Esophagus muscularis mucosa (tissue), 4 donors: ENCODE measurements at regions of chr4 and their contacts with region 1.

Region 1: DNA sequence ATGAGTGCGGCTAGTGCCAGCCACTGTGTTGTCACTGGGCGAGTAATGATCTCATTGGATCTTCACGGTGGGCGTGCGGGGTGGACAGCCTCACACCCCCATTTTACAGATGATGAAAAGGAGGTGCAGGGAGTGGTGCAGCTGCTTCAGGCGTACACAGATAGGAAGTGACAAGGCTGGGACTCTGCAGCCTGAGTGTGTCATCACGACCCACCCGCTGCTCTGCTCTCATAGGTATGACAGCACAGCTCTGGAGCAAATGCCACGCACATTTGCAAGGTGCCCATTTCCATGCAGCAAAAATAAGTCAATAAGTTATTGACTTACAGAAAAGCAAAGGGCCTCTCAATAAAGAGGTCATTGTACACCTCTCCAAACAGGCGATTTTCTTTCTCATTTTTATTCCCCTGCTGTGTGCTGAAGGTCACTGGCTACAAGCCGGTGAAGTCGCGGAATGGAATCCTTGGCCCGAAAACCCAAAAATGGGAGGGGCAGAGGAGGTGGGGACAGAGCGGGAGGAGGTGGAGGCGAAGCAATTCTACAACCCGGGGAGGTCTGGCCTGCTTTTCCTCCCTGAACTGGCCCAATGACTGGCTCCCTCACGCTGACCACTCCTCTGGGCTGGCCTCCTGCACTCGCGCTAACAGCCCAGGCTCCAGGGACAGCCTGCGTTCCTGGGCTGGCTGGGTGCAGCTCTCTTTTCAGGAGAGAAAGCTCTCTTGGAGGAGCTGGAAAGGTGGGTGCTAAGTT is at the start of gene SOD3:
- DNase-seq: peak; percentile 97
- H3K4me3 ChIP-seq: peak within 1 kb of the TSS; percentile 55 to 73 (median 58)
- H3K27ac ChIP-seq: peak within 1 kb of the TSS; percentile 90 to 96 (median 92)
- H3K4me1 ChIP-seq: peaks cover 30 to 73% (median 66%) of the 10 kb centered on the region in 4 donors
- H3K27me3 ChIP-seq: peaks cover 0 to 5% (median 0%) of the 10 kb centered on the region in 4 donors
- CTCF ChIP-seq: no peak
- EP300 ChIP-seq: peak; percentile 23
- POLR2A ChIP-seq: peak; percentile 84
- total RNA-seq, gene SOD3: 404 to 1,012 (median 570) TPM

Region 2: GRCh38 chr4:24472514-24473308 is 322.4 kb before region 1 on chr4:
- intact Hi-C with region 1: loop called (anchors 10 kb)
- DNase-seq: peak; percentile 97
- H3K4me3 ChIP-seq: peak overlapping the region; percentile 68 to 81 (median 72)
- H3K27ac ChIP-seq: peak overlapping the region; percentile 81 to 94 (median 88)
- H3K4me1 ChIP-seq: peaks cover 16 to 60% (median 51%) of the 10 kb centered on the region in 4 donors
- H3K27me3 ChIP-seq: peaks cover 0 to 16% (median 0%) of the 10 kb centered on the region in 4 donors
- CTCF ChIP-seq: peak; percentile 58 to 81 (median 62)
- EP300 ChIP-seq: no peak
- POLR2A ChIP-seq: peak; percentile 9

Region 3: GRCh38 chr4:24584175-24584850 is 210.8 kb before region 1 on chr4 and contains the start of gene DHX15:
- intact Hi-C with region 1: loop called (anchors 10 kb)
- DNase-seq: peak; percentile 99
- H3K4me3 ChIP-seq: peak within 1 kb of the TSS; percentile 78 to 99 (median 97)
- H3K27ac ChIP-seq: peak within 1 kb of the TSS; percentile 96 to 100 (median 98)
- H3K4me1 ChIP-seq: peaks cover 25 to 43% (median 41%) of the 10 kb centered on the region in 4 donors
- H3K27me3 ChIP-seq: no peaks in the 10 kb centered on the region
- CTCF ChIP-seq: no peak
- EP300 ChIP-seq: no peak
- POLR2A ChIP-seq: peak; percentile 61
- total RNA-seq, gene DHX15: 86.8 to 113 (median 94.4) TPM

Region 4: DNA sequence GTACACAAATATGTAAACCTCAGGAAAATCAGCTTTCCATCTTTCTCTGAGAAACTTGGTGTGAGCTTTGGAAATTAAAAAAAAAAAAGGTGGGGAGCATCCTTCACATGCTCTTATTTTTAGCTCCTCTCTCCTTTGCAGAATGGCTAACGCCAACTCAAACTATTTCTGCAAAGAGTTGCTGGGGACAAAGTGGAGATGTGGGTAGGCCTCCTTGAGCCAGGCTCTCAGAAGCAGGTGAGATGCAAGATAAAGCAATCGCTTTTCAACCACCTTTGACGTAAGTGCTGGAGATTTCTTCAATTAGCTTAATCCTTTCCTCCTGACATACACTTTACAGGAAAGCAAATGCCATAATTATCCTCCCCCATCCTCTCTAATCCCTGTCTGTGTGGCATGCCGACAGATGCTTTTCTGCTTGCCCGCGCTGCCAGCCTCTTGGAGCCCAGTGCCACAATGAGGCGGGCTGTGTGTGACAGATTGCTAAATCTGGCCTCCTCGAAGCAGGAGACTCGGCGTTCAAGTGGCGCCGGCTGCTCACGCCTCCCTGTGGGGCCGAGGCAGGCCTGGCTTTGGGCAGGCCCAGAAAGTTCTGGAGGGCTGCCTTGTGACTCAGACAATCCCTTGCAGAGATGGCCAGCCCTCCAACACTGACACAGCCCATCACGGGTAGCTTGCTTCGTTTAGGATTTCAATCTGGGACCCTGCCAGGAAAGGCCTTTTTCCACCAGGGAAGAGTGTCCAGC is 64.7 kb before region 1 on chr4:
- intact Hi-C with region 1: no loop called
- DNase-seq: no peak
- H3K4me3 ChIP-seq: no peak overlapping the region
- H3K27ac ChIP-seq: peak overlapping the region; percentile 46 to 76 (median 67)
- H3K4me1 ChIP-seq: peaks cover 8 to 44% (median 43%) of the 10 kb centered on the region in 4 donors
- H3K27me3 ChIP-seq: no peaks in the 10 kb centered on the region
- CTCF ChIP-seq: no peak
- EP300 ChIP-seq: peak; percentile 1
- POLR2A ChIP-seq: no peak

Region 5: DNA sequence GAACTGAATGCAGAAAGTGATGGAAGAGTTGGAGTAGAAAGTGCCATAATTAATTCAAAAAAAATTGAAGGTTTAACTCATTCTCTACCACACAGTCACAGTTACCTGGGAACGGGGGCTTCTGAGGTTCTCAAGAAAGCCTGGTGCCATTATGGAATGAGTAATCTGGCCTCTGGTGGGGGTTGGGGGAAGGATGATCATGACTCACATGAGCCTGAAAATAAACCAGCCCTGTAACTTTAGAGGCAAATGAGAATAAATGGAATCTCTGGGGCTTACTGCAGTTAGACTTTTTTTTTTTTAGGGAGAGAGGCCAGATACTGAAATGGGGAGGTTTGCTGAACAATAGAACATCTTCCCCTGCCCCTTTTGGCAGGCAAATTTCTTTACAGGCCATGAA is 55.6 kb after region 1 on chr4:
- intact Hi-C with region 1: loop called (anchors 5 kb)
- DNase-seq: no peak
- H3K4me3 ChIP-seq: no peak overlapping the region
- H3K27ac ChIP-seq: peak overlapping the region; percentile 55 to 72 (median 64)
- H3K4me1 ChIP-seq: peaks cover 6 to 54% (median 51%) of the 10 kb centered on the region in 4 donors
- H3K27me3 ChIP-seq: no peaks in the 10 kb centered on the region
- CTCF ChIP-seq: no peak
- EP300 ChIP-seq: no peak
- POLR2A ChIP-seq: no peak

Region 6: GRCh38 chr4:24912252-24913118 is 117.4 kb after region 1 on chr4 and contains the start of gene CCDC149:
- intact Hi-C with region 1: loop called (anchors 5 kb)
- DNase-seq: no peak
- H3K4me3 ChIP-seq: peak within 1 kb of the TSS; percentile 68 to 90 (median 74)
- H3K27ac ChIP-seq: peak within 1 kb of the TSS; percentile 90 to 92 (median 92)
- H3K4me1 ChIP-seq: peaks cover 6 to 37% (median 25%) of the 10 kb centered on the region in 4 donors
- H3K27me3 ChIP-seq: no peaks in the 10 kb centered on the region
- CTCF ChIP-seq: peak in 2 of 3 experiments; percentile 5 to 10
- EP300 ChIP-seq: no peak
- POLR2A ChIP-seq: no peak
- total RNA-seq, gene CCDC149: 21.0 to 37.9 (median 34.0) TPM

Region 7: GRCh38 chr4:24980064-24980690 is 185.1 kb after region 1 on chr4:
- intact Hi-C with region 1: loop called (anchors 5 kb)
- DNase-seq: no peak
- H3K4me3 ChIP-seq: peak overlapping the region; percentile 28 to 40 (median 34)
- H3K27ac ChIP-seq: peak overlapping the region; percentile 50 to 74 (median 64)
- H3K4me1 ChIP-seq: peaks cover 23 to 41% (median 39%) of the 10 kb centered on the region in 4 donors
- H3K27me3 ChIP-seq: no peaks in the 10 kb centered on the region
- CTCF ChIP-seq: peak; percentile 83 to 93 (median 88)
- EP300 ChIP-seq: no peak
- POLR2A ChIP-seq: no peak

Region 8: GRCh38 chr4:25098964-25099891 is 304.1 kb after region 1 on chr4:
- intact Hi-C with region 1: no loop called
- DNase-seq: no peak
- H3K4me3 ChIP-seq: no peak overlapping the region
- H3K27ac ChIP-seq: no peak overlapping the region
- H3K4me1 ChIP-seq: peaks cover 7 to 19% (median 10%) of the 10 kb centered on the region in 4 donors
- H3K27me3 ChIP-seq: no peaks in the 10 kb centered on the region
- CTCF ChIP-seq: no peak
- EP300 ChIP-seq: no peak
- POLR2A ChIP-seq: no peak

Region 9: DNA sequence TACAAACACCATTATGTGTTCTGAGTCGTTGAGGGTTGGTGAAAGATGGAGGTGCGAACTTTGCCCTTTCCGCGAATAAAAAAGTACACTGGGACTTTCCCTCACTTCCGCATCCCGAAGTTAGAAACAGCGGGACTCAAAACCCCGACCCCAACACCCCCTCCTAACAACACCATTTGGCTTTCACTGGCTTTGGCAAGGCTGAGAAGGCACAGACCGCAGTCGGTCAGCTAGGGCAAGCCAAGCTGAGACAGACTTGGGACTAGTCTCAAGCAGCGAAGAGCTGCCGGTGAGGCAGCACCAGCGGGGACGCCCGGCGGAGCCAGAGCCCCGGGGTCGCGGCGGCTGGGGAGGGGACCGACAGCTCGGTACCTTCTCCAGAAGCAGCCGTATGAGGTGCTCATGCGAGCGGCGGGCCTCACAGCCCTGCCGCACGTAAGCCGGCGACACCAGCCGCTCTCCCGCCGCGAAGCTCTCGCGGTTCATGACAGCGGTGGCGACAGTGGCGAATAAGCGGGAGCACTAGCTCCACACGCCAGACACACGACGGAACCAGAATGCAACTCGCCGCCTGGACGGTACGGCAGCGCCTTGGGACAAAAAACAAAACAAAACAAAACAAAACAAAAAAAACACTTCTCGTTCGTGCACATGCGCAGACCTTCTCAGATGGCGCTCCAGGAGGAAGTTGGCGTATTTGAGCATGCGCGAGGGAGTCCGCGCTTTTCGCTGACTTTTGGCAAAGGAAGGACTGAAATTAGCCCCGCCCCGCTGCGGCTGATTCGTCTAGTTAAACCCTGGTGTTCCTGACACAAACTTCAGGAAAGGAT is 365.0 kb after region 1 on chr4 and contains the start of gene SEPSECS:
- intact Hi-C with region 1: loop called (anchors 10 kb)
- DNase-seq: peak; percentile 99
- H3K4me3 ChIP-seq: peak within 1 kb of the TSS; percentile 82 to 92 (median 87)
- H3K27ac ChIP-seq: peak within 1 kb of the TSS; percentile 96 to 97 (median 97)
- H3K4me1 ChIP-seq: peaks cover 14 to 24% (median 22%) of the 10 kb centered on the region in 4 donors
- H3K27me3 ChIP-seq: no peaks in the 10 kb centered on the region
- CTCF ChIP-seq: no peak
- EP300 ChIP-seq: no peak
- POLR2A ChIP-seq: no peak
- total RNA-seq, gene SEPSECS: 3.8 to 6.2 (median 4.0) TPM